Activated B cell treated with CpG ODN at 0.5 μM for 24 hours (primary cell): ENCODE measurements at regions of chr11 and their contacts with region 1.

Region 1: DNA sequence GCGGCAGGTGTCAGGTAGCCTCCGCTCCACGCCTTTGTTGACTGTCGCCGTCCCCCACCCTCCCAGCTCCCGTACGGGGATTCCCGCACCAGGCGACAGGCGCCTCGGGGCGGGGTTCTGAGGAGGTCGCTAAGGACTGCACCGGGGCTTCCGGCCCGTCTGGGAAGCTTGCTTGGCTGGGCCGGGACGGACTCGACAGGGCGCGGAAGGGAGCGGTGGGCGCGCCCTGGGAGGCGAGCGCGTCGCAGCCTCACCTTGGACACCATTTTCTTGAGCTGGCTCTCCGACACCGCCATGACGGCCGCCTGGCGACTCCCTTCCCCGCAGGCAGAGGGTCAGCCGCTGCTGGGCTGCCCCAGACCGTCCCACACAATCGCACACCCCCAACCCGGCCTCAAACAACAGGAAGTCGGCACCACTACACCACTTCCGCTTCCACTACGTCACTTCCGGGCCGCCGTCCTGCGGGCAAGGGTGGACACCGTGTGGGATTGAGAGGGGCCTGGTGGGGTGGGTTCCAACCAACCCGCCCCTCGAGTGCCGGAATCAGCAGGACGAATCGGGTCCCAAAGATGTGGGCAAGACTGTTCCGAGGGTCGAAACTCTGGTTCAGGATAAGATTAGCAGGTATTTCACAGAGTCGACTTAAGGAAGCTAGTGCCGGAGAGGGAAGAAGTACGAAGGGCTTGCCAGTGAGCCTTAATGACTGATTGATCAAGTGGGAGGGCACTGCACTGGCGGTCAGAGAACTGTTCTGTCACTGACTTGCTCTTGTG is at the start of gene TSG101:
- DNase-seq: peak; percentile 95
- ATAC-seq: peak; percentile 84
- H3K4me3 Mint-ChIP-seq: peak within 1 kb of the TSS; percentile 100
- H3K27ac Mint-ChIP-seq: peak within 1 kb of the TSS; percentile 100
- H3K4me1 Mint-ChIP-seq: peaks cover 44% of the 10 kb centered on the region
- H3K27me3 Mint-ChIP-seq: no peaks in the 10 kb centered on the region
- CTCF ChIP-seq: no peak
- total RNA-seq, gene TSG101: 45.3 and 47.2 TPM in 2 replicates

Region 2: DNA sequence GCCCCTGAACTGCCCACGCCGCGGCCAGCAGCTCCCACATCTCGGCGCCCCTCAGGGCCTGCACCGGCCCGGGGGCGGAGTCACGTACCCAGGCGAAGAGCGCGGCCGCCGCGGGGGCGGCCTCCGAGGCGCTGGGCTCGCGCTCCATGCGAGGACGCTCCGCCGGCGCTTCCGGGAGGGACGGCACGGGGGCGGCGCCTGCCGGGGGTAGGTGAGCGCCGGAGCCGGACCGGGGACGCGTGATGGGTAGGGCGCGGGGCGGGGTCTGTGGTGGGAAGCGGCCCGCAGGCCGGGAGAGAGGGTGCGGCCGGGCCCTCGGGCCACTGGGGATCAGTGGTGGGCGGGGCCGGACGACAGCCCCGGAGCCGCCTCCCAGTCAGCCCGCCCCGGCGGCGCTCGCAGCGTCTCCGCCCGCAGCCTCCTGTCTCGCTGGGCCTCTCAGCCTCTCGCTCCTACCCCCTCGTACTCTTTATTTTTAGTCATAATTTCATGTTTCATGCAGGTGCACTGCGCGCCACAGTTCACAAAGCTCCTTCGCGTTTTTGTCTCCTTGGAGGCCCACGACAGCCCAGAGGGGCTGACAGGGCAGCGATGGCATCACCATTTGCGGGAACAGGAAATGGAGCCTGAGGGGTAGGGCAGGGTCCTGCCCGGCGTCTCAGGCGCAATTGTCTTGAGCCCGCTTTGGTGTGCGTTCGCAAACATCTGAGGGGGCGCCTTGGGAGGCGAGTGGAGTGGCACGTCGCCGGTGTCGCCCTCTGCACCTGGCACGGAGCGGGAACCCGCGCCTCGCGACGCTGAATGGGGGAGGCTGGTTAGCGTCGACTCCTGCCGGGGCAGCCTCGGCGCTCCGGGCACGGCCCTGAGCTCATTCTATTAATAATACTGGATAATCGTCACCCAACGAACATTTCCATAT is 513.6 kb before region 1 on chr11 and contains the start of gene SERGEF:
- CTCF ChIA-PET with region 1: no interaction called
- POLR2A ChIA-PET with region 1: interaction called, 6 read pairs
- intact Hi-C with region 1: loop called (anchors 1 kb)
- DNase-seq: peak; percentile 96
- ATAC-seq: peak; percentile 94
- H3K4me3 Mint-ChIP-seq: peak within 1 kb of the TSS; percentile 100
- H3K27ac Mint-ChIP-seq: peak within 1 kb of the TSS; percentile 99
- H3K4me1 Mint-ChIP-seq: peaks cover 16% of the 10 kb centered on the region
- H3K27me3 Mint-ChIP-seq: no peaks in the 10 kb centered on the region
- CTCF ChIP-seq: no peak
- total RNA-seq, gene SERGEF: 38.4 and 47.4 TPM in 2 replicates

Region 3: DNA sequence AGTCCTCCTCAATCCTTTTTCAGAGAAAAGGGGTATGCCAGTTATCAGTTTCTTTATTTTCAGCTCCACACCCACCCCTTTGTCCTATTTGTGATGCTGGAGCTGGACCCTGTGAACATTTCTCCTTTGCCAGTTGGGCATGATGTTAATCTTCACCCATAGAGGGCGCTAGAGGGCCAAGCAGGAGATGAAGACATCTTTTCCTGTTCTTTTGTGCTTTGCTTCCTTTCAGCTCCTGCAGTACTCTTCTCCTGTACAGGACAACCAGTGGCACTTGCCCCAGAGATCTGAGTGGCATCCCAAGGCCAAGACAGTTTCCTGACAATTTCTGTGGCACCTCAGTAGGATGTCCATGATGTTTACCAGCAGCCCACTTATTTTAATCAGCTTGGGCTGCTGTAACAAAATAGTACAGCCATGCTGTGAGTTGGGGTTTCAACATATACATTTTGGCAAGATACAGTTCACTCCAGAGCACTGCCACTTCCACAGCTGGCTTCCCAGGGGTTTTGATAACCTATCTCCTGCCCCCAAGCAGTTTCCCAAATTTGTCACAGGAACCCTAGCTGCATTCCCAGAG is 282.8 kb before region 1 on chr11:
- CTCF ChIA-PET with region 1: no interaction called
- POLR2A ChIA-PET with region 1: interaction called, 10 read pairs
- intact Hi-C with region 1: loop called (anchors 10 kb)
- DNase-seq: no peak
- ATAC-seq: no peak
- H3K4me3 Mint-ChIP-seq: no peak overlapping the region
- H3K27ac Mint-ChIP-seq: no peak overlapping the region
- H3K4me1 Mint-ChIP-seq: peaks cover 15% of the 10 kb centered on the region
- H3K27me3 Mint-ChIP-seq: peaks cover 16% of the 10 kb centered on the region
- CTCF ChIP-seq: no peak

Region 4: DNA sequence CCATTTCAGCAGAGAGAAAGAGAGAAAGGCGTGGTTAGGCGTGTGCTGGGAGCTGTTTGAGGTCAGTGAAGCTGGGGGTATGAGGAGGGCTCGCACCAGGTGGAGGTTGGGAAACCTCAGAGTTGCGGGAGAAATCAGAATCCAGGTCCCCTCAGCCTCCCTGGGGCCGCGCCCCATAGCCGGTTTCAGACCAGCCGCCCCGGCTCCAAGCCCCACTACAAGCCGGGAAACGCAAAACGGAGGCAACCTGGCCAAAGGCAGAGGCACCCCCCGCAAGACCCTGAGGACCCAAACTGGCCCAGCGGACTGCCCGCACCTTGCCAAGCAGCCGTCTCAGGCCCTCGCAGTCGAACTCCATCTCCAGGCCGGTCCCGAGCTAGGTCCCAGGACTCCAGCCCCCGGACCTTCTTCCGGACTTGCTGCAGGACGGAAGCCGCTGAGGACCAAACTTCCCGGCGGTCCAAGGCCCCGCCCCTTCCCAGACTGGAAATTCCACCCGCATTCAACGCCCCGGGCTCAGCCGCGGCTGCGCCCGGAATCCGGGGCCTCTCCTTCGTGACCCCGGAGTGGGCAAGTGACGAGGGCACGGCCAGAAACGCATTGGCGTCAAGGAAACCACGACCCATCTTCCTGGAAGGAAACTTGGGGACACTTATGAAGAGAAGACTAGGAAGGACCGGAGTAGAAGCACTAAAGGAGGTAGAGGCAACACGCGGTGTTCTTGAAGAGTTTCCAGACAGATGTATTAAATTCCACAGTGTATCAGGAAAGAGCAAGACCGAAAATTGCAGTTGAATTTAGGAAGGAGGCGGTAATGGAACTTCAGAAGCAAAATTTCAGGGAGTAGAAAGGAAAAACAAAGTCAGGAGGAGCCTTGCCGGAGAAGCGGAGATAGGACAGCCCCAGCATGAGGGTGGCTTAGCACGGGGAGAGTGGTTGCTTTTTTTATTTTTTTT is 61.9 kb after region 1 on chr11 and contains the start of gene UEVLD:
- CTCF ChIA-PET with region 1: no interaction called
- POLR2A ChIA-PET with region 1: interaction called, 12 read pairs
- intact Hi-C with region 1: loop called (anchors 1 kb)
- DNase-seq: peak; percentile 65
- ATAC-seq: peak; percentile 73
- H3K4me3 Mint-ChIP-seq: no peak within 1 kb of the TSS
- H3K27ac Mint-ChIP-seq: no peak within 1 kb of the TSS
- H3K4me1 Mint-ChIP-seq: no peaks in the 10 kb centered on the region
- H3K27me3 Mint-ChIP-seq: no peaks in the 10 kb centered on the region
- CTCF ChIP-seq: no peak
- total RNA-seq, gene UEVLD: 12.9 and 18.0 TPM in 2 replicates

Region 5: GRCh38 chr11:18721561-18722292 is 195.0 kb after region 1 on chr11:
- CTCF ChIA-PET with region 1: interaction called, 4 read pairs
- POLR2A ChIA-PET with region 1: interaction called, 7 read pairs
- intact Hi-C with region 1: loop called (anchors 5 kb)
- DNase-seq: peak; percentile 45
- ATAC-seq: peak; percentile 56
- H3K4me3 Mint-ChIP-seq: peak overlapping the region; percentile 92
- H3K27ac Mint-ChIP-seq: peak overlapping the region; percentile 46
- H3K4me1 Mint-ChIP-seq: peaks cover 12% of the 10 kb centered on the region
- H3K27me3 Mint-ChIP-seq: no peaks in the 10 kb centered on the region
- CTCF ChIP-seq: peak; percentile 39